Left lung (tissue), 14 donors: ENCODE measurements at regions of chr5 and their contacts with region 1.

Region 1: DNA sequence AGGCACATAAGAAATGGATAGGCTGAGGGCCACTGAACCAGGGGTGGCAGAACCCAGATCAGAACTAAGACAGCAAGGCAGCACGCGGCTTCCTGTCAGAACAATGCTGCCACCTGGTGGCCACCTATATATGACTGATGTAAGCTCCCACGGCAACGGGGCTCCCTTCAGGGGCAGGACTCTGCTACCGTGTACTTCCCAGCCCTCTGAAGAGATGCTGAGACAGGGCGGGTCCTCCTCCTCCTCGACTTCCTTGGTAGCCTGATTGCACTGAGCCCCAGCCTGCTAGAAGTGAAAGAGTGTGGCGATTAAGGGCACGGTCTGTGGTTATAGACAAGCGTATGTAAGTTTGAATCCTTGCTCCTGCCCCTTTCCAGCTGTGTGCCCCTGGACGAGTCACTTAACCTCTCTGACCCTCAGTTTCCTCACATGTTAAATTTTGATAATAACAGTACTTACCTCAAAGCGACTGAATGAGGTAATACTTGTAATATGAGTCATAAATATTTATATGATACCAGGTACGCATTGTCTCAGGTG is 13.3 kb downstream of the RPS14 start:
- DNase-seq: peak; percentile 79 to 90 (median 88)
- ATAC-seq: peak; percentile 97
- H3K4me3 ChIP-seq: no peak overlapping the region
- H3K27ac ChIP-seq: no peak overlapping the region
- H3K4me1 ChIP-seq: peaks cover 0 to 7% of the 10 kb centered on the region in 2 donors
- H3K27me3 ChIP-seq: no peaks in the 10 kb centered on the region
- CTCF ChIP-seq: peak; percentile 87 to 88

Region 2: GRCh38 chr5:150263801-150264621 is 172.2 kb before region 1 on chr5:
- intact Hi-C with region 1: loop called in 1 of 2 experiments (anchors 10 kb)
- DNase-seq: peak in 1 of 4 donors; percentile 75
- ATAC-seq: peak; percentile 80
- H3K4me3 ChIP-seq: no peak overlapping the region
- H3K27ac ChIP-seq: no peak overlapping the region
- H3K4me1 ChIP-seq: peaks cover 0 to 10% of the 10 kb centered on the region in 2 donors
- H3K27me3 ChIP-seq: no peaks in the 10 kb centered on the region
- CTCF ChIP-seq: no peak

Region 3: DNA sequence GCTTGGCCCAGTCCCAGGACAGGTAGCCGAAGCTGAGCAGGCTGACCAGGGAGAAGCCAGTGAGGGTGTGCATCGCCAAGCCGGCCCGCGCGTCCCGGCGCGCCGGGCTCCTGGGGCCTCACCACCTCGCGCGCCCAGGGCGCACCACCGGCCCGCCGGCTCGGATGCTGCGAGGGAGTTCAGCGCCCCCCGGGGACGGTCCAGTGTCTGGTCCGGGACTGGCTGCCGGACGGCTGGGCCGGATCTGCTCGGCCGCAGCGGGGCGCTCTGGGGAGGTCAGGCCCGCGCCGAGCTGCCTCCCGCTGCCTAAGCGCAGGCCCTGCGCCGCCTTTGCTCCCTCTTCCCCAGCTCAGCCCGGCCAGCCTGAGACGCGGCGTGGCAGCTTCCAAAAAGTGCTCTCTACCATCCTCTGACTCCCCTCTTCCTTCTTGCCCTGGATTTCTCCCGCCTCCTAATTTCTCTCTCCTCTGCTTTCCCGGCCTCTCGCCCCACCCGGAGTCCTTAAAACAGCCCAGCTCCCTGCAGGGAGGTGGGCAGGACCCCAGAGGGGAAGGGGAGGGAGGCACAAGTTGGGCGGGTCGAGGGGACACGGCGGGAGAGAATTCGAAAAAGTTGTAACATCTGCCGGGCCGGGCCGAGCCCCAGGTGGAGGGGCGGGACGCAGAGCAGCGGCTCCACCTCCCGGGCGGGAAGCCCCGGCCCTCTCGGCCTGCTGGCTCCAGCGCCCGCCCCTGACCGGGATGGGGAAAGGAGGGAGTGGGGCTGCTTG is 133.7 kb before region 1 on chr5 and contains the start of gene ARSI:
- intact Hi-C with region 1: no loop called
- DNase-seq: peak in 3 of 4 donors; percentile 59 to 95 (median 91)
- ATAC-seq: peak; percentile 76
- H3K4me3 ChIP-seq: peak within 1 kb of the TSS; percentile 27 to 32
- H3K27ac ChIP-seq: peak within 1 kb of the TSS; percentile 28 to 69
- H3K4me1 ChIP-seq: peaks cover 12 to 17% of the 10 kb centered on the region in 2 donors
- H3K27me3 ChIP-seq: peaks cover 11 to 50% of the 10 kb centered on the region in 2 donors
- CTCF ChIP-seq: no peak
- polyA plus RNA-seq, gene ARSI: 19.2 to 31.8 (median 25.0) TPM

Region 4: DNA sequence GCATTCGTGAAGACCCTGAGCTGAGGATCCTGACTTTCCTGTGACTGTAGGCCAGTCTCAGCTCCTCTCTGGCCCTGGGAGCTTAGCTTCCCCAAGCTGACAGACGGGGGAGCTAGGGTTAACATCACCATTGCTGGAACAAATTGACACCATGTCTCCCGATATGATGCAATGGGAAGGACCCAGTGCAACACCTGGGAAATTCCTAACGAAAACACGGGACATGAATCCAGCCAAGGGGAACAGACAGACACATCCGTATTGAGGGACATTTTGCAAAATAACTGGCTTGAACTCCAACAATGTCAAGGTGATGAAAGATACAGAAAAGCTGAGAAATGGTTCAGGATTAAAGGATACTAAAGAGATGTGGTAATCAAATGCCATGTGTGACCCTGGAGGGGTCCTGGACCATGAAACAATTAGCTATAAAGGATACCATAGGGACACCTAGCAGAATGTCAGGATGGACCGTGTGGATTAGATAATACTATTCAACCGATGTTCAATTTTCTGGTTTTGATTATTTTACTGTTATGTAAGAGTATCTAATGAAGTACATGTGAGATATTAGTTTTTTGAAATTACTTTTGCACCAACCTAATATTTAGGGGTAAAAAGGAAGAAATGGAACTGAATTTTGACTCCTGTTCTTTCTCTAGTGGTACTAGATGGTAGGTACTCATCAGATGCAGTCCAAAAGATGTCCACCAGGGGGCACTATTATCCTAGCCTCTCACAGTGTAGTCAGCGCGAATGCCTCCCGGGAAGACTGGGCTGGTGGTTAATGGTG is 124.4 kb after region 1 on chr5:
- intact Hi-C with region 1: no loop called
- DNase-seq: peak in 3 of 4 donors; percentile 74 to 90 (median 82)
- ATAC-seq: peak; percentile 96
- H3K4me3 ChIP-seq: no peak overlapping the region
- H3K27ac ChIP-seq: no peak overlapping the region
- H3K4me1 ChIP-seq: peaks cover 0 to 9% of the 10 kb centered on the region in 2 donors
- H3K27me3 ChIP-seq: no peaks in the 10 kb centered on the region
- CTCF ChIP-seq: peak; percentile 94 to 95

Region 5: GRCh38 chr5:150599917-150600499 is 163.8 kb after region 1 on chr5:
- intact Hi-C with region 1: no loop called
- DNase-seq: peak; percentile 78 to 93 (median 88)
- ATAC-seq: peak; percentile 82
- H3K4me3 ChIP-seq: no peak overlapping the region
- H3K27ac ChIP-seq: peak overlapping the region; percentile 10 to 25
- H3K4me1 ChIP-seq: peaks cover 14 to 33% of the 10 kb centered on the region in 2 donors
- H3K27me3 ChIP-seq: no peaks in the 10 kb centered on the region
- CTCF ChIP-seq: no peak

Region 6: DNA sequence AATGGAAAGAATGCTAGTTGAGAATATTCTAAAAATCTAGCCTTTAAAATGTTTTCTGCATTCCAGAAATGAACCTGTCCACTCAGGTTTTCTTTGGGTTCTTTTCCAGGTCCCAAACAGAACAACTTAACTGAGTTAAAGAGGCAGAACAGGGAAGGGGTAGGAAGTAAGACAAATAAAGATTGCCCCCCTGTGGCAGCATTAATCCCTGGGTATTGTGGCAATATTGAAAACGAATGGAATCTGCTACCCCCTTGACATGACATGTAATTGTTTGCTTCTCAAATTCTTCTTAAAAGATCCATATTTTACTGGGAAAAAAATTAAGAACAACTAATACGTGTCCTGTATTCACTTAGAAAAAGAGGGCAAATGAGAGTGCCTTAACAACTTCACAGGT is 274.0 kb after region 1 on chr5:
- intact Hi-C with region 1: no loop called
- DNase-seq: no peak
- ATAC-seq: no peak
- H3K4me3 ChIP-seq: no peak overlapping the region
- H3K27ac ChIP-seq: no peak overlapping the region
- H3K4me1 ChIP-seq: no peaks in the 10 kb centered on the region
- H3K27me3 ChIP-seq: no peaks in the 10 kb centered on the region
- CTCF ChIP-seq: peak in 1 of 2 donors; percentile 11